Spleen (tissue), 13 donors: ENCODE measurements at regions of chr5 and their contacts with region 1.

Region 1: DNA sequence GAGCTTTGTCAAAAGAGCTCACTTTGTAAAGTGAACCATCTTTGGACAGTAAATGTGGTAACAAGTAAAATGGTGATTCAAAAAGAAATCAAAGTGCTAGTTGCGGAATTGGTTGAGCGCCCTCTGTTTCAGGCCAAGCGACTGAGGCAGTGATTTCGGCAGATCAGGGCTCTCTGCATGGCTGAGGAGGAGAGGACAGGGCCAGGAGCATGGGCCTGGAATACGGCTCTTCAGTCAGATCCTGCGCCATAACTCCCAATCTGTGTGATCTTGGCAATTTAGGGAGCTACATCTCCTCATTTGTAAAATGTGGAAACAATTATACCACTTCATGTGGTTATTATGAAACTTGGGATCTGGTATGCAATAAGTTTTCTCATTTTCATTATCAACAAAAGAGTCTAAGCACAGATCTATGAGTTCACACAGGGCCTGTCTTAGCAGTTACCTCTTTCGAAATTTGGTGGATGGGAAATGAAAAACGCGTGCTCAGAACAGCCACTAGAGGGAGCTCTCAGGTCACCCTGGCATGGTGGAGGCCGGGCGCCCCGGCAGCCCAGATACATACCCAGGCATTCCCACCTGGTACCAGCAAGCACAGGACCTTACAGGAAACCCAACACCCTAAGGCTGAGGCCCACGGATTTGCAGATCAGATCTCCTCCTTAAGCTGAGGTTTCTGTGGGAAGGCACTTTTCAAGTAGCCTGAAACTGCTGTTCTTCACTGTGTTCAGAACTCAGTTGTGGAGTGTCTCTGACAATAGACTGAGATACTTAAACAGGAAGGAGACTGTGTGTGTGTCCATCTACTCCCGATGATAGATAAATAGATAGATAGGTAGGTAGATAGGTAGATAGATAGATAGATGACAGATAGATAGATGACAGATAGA is 303.7 kb downstream of the RAB3C start:
- DNase-seq: peak; percentile 83
- H3K4me3 ChIP-seq: no peak overlapping the region
- H3K27ac ChIP-seq: peak overlapping the region in 4 of 8 donors; percentile 43 to 75 (median 59)
- H3K4me1 ChIP-seq: peaks cover 0 to 21% (median 2%) of the 10 kb centered on the region in 6 donors
- H3K27me3 ChIP-seq: no peaks in the 10 kb centered on the region
- CTCF ChIP-seq: peak; percentile 24 to 87 (median 80)
- POLR2A ChIP-seq: no peak

Region 2: DNA sequence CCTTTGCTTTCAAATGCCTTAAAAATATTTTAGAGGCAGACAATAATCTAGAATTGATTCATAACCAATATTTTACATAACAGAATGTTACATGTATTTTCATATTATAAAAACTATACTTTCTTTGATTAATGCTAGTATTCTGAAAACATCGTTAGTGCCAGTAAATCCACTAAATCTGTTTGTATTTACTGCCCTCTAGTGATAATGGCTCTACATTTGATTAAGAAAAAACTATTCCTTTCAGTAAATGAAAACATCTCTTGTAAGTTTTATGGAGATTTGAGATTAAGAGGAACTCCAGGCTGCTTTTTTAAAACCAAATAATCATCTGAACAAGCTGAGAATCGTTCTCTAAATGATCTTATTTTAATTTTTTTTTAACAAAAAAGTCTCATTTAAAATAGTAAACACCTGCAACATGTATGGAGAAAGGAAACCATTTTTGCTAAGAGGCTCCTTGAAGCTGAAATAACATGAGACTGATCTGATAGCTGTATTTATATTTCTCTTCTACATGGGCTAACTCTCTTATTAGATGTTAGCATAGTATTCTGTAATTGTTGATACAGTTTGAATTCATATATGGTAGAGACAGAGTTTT is 121.0 kb after region 1 on chr5:
- intact Hi-C with region 1: loop called (anchors 5 kb)
- DNase-seq: no peak
- H3K4me3 ChIP-seq: no peak overlapping the region
- H3K27ac ChIP-seq: no peak overlapping the region
- H3K4me1 ChIP-seq: peaks cover 0 to 30% (median 7%) of the 10 kb centered on the region in 6 donors
- H3K27me3 ChIP-seq: no peaks in the 10 kb centered on the region
- CTCF ChIP-seq: peak in 9 of 11 experiments; percentile 26 to 58 (median 42)
- POLR2A ChIP-seq: no peak

Region 3: GRCh38 chr5:59174248-59174844 is 287.8 kb after region 1 on chr5:
- intact Hi-C with region 1: loop called (anchors 10 kb)
- DNase-seq: no peak
- H3K4me3 ChIP-seq: no peak overlapping the region
- H3K27ac ChIP-seq: no peak overlapping the region
- H3K4me1 ChIP-seq: peaks cover 0 to 5% (median 0%) of the 10 kb centered on the region in 6 donors
- H3K27me3 ChIP-seq: no peaks in the 10 kb centered on the region
- CTCF ChIP-seq: peak in 10 of 11 experiments; percentile 21 to 72 (median 58)
- POLR2A ChIP-seq: no peak

Region 4: DNA sequence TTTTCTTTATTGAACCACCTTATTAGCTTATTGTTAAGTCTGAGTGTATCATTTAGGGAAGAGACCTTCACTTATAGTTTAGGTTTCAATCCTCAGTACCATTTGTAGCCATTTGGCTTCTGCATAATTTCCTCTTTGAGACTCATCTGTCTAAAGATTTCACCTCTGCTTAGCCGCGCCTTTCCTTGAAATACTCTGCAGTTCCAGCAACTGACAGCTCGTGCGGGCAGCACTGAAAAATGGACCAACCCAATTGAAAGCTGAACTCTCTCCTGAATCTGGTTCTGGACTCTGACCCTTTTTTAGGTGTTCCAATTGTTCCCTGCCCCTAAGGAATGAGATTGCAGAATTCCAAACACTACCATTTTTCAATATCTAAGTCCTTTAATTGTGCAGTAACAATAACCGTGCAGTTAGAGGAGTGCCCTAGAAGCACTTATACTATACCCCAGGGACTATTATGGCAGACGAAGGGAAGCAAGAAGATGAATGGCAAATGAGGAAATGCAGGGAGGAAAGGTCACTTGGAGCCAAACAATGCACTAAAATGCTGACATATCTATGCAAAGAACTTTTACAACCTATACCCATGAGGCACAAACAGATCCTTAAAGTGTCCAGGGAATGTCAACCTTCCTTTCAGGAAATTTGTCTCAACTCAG is 1057.0 kb after region 1 on chr5:
- intact Hi-C with region 1: no loop called
- DNase-seq: no peak
- H3K4me3 ChIP-seq: no peak overlapping the region
- H3K27ac ChIP-seq: no peak overlapping the region
- H3K4me1 ChIP-seq: no peaks in the 10 kb centered on the region
- H3K27me3 ChIP-seq: no peaks in the 10 kb centered on the region
- CTCF ChIP-seq: no peak
- POLR2A ChIP-seq: no peak